ENCODE measurements at regions of chr9 and their contacts with region 1.

Region 1: GRCh38 chr9:6584881-6585597 is 60.5 kb downstream of the GLDC start:
- DNase-seq: no peak
- ATAC-seq: peak; percentile 45

Region 2: DNA sequence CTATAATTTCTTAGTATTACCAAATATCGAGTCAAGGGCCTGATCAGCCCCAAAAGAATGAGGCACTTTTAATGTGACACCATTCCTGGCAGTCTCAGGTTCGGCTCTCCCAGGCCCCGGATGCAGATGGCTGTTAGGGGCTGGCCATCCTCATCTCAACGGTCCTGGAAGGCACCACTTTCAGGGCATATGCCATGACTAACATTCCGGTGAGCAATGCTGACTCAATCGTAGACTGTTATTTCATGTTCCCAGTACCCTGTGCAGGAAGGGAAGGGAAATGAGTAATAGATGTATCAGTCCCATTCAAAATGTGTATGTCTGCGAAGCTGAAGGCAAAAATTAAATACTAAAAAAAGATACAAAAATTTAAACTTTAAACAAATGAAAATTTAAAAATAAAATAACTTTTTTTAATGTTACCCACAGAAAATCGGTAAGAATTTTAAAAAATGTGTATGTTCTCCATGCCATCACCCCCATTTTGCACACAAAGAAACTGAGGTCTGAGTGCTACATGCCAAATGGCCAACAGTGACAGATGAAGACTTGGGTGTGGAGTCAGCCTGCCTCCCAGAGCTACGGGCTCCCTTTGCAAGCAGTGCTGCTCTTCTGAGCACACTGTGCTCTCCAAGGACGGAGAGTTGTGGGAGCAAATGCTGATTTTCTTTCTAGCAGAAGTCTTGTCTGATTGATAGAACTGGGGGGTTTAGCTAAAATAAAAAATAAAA is 18.5 kb before region 1 on chr9:
- intact Hi-C with region 1: no loop called
- DNase-seq: no peak
- ATAC-seq: no peak

Region 3: GRCh38 chr9:6667633-6668280 is 82.7 kb after region 1 on chr9:
- intact Hi-C with region 1: loop called (anchors 10 kb)
- DNase-seq: no peak
- ATAC-seq: no peak